ENCODE measurements at regions of chr2 and their contacts with region 1.

Region 1: GRCh38 chr2:44981136-44982108 is 27.8 kb downstream of the SIX2 start:
- DNase-seq: peak; percentile 85
- H3K4me3 ChIP-seq: no peak overlapping the region
- H3K27ac ChIP-seq: no peak overlapping the region
- H3K4me1 ChIP-seq: no peaks in the 10 kb centered on the region
- H3K27me3 ChIP-seq: peaks cover 5% of the 10 kb centered on the region

Region 2: GRCh38 chr2:44170311-44170717 is 811.1 kb before region 1 on chr2:
- in situ Hi-C with region 1: no loop called
- DNase-seq: peak; percentile 56
- H3K4me3 ChIP-seq: peak overlapping the region; percentile 87
- H3K27ac ChIP-seq: peak overlapping the region; percentile 54
- H3K4me1 ChIP-seq: peaks cover 30% of the 10 kb centered on the region
- H3K27me3 ChIP-seq: no peaks in the 10 kb centered on the region

Region 3: GRCh38 chr2:44928483-44929158 is 52.8 kb before region 1 on chr2:
- in situ Hi-C with region 1: no loop called
- DNase-seq: peak; percentile 34
- H3K4me3 ChIP-seq: no peak overlapping the region
- H3K27ac ChIP-seq: no peak overlapping the region
- H3K4me1 ChIP-seq: no peaks in the 10 kb centered on the region
- H3K27me3 ChIP-seq: peaks cover 98% of the 10 kb centered on the region

Region 4: DNA sequence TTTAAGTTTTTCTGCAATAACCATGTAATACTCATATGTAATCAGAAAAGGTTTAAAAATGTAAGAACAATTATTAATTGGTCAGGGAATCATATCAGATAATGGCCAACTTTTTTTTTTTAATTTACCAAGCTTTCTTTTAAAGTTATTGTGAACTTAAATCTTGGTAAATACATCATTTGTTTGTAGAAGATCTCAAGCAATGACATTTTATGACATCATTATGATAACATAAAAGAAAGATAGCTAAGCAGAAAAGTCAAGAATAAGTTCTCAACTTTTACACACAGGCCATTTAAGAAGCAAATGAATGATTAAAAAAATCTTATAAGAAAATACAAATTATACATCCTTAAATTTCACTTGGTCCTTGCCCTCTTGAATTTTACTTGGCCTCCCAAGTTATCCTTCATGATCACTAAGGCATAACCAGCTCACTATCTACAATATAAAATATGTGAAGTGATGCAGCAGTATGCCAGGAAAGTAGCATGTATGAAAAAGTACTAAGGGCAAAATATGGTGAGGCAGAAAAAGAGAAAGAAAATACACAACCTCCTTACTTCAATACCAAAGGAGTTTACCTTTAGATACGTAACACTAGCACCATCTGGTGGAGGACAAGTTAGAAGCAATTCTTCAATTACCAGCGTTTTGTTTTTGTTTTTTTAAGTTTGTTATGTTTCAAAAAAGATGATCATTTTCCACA is 513.0 kb after region 1 on chr2:
- in situ Hi-C with region 1: loop called (anchors 5 kb)
- DNase-seq: peak; percentile 81
- H3K4me3 ChIP-seq: no peak overlapping the region
- H3K27ac ChIP-seq: no peak overlapping the region
- H3K4me1 ChIP-seq: peaks cover 7% of the 10 kb centered on the region; the same call in 1 of the 2 replicates
- H3K27me3 ChIP-seq: no peaks in the 10 kb centered on the region

Measured in GM23248 (cell line).